ENCODE measurements at regions of chr22 and their contacts with region 1.

Region 1: GRCh38 chr22:46006379-46007002 is 29.5 kb upstream of the WNT7B start:
- DNase-seq: peak; percentile 65
- H3K4me3 ChIP-seq: no peak overlapping the region
- H3K27ac ChIP-seq: peak overlapping the region; percentile 87
- H3K27me3 ChIP-seq: no peaks in the 10 kb centered on the region
- CTCF ChIP-seq: peak; percentile 91

Region 2: DNA sequence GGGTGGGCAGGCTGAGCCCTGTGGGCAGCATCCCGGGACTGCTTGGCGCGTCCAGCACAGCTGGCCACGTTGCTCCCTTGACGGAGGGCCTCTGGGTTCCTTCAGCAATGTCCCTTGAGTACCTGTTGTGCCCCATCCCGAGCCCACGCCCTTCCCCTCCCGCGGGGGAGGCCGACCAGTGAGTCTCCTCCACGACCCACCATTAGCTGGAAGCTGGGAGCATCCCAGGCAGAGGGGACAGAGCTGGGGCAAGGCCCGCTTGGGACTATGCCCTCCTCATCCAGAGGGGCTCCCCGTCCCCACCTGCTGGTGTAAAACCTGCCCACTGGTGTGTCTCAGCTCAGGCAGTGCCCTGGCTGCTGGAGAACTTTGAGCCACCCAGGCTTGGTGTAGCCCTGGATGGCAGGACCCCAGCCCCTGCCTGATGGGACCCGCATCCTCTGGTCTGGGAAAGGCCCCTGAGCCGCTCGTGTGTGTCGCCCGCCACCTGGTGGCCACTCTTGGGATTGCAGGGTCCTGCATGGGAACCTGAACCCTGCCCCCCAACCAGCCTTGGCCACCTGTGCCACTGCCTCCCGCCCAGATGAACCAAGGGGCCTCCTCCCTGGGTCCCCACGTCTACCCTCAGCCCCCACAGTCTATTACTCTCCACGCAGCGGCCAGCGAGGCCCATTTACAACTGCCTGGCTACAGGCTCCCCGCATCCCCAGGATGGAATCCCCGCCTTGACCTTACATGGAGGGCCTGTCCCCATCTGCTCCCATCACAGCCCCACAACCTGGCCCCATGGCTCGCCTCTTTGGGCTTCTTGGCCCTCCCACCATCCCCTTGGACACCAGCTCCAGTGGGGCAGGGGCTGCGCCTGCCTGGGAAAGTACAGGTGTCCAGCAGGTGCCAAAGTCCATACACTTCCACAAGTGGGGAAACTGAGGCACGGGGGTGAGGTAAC is 1270.7 kb before region 1 on chr22:
- CTCF ChIA-PET with region 1: no interaction called
- POLR2A ChIA-PET with region 1: no interaction called
- DNase-seq: no peak
- H3K4me3 ChIP-seq: no peak overlapping the region
- H3K27ac ChIP-seq: no peak overlapping the region
- H3K27me3 ChIP-seq: no peaks in the 10 kb centered on the region
- CTCF ChIP-seq: peak; percentile 84

Region 3: GRCh38 chr22:45946805-45947600 is 59.5 kb before region 1 on chr22:
- CTCF ChIA-PET with region 1: no interaction called
- POLR2A ChIA-PET with region 1: no interaction called
- DNase-seq: no peak
- H3K4me3 ChIP-seq: no peak overlapping the region
- H3K27ac ChIP-seq: no peak overlapping the region
- H3K27me3 ChIP-seq: no peaks in the 10 kb centered on the region
- CTCF ChIP-seq: no peak

Region 4: GRCh38 chr22:45960477-45961386 is 45.8 kb before region 1 on chr22:
- CTCF ChIA-PET with region 1: no interaction called
- POLR2A ChIA-PET with region 1: no interaction called
- DNase-seq: no peak
- H3K4me3 ChIP-seq: no peak overlapping the region
- H3K27ac ChIP-seq: no peak overlapping the region
- H3K27me3 ChIP-seq: no peaks in the 10 kb centered on the region
- CTCF ChIP-seq: no peak

Region 5: GRCh38 chr22:46019351-46019750 is 12.9 kb after region 1 on chr22:
- CTCF ChIA-PET with region 1: interaction called, 31 read pairs
- POLR2A ChIA-PET with region 1: no interaction called
- DNase-seq: no peak
- H3K4me3 ChIP-seq: no peak overlapping the region
- H3K27ac ChIP-seq: no peak overlapping the region
- H3K27me3 ChIP-seq: no peaks in the 10 kb centered on the region
- CTCF ChIP-seq: no peak

Region 6: GRCh38 chr22:46033256-46034200 is 27.0 kb after region 1 on chr22:
- CTCF ChIA-PET with region 1: interaction called, 15 read pairs
- POLR2A ChIA-PET with region 1: interaction called, 5 read pairs
- DNase-seq: no peak
- H3K4me3 ChIP-seq: no peak overlapping the region
- H3K27ac ChIP-seq: no peak overlapping the region
- H3K27me3 ChIP-seq: peaks cover 2% of the 10 kb centered on the region
- CTCF ChIP-seq: no peak

Region 7: DNA sequence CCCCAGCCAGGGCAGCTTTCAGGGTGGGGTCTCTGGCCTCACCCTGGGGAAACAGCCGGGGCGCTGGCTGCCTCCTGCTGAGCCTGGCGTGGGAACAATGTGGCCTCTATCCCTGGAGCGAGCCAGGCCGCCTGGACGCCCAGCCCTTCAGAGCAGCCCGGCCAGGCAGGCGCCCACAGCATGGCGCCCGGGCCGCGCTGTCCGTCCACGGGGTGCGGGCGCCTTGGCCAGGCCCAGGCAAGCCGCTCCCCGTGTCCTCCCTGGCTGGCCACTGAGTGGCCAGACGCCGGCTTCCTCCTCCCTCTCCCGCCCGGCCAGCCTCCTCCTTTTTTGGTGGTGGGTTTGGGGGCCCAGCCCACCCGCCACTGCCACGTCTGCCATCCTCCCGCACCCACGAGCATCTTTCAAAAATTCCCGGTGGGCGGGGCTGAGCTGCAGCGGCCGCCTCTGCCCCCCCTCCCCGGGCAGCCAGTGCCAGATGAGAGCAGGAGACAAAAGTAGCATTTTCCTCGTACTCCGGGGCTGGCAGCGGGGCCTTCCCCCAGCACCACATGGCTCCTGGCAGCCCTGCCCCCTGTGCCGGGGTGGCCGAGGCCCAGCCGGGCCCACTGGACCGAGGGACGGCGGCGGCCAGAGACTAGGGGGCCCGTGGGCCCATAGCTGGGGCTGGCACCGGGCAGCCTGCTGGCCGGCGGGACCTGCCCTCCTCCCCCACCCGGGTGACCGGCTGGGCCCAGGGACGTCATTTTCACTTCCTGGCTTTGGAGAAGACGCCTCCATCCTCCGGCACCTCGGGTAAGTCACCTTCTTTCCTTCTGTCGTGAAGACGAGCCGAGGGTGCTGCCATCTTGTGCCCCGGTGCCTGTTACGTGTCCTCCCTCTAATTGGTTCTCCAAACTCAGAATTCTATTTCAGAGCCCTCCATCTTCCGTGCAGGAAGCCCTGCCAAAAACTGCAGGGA is 73.7 kb after region 1 on chr22:
- CTCF ChIA-PET with region 1: interaction called, 15 read pairs
- POLR2A ChIA-PET with region 1: interaction called, 3 read pairs
- DNase-seq: no peak
- H3K4me3 ChIP-seq: peak overlapping the region; percentile 56
- H3K27ac ChIP-seq: peak overlapping the region; percentile 57
- H3K27me3 ChIP-seq: no peaks in the 10 kb centered on the region
- CTCF ChIP-seq: no peak

Region 8: GRCh38 chr22:46108564-46109473 is 102.3 kb after region 1 on chr22:
- CTCF ChIA-PET with region 1: interaction called, 91 read pairs
- POLR2A ChIA-PET with region 1: no interaction called
- DNase-seq: no peak
- H3K4me3 ChIP-seq: no peak overlapping the region
- H3K27ac ChIP-seq: no peak overlapping the region
- H3K27me3 ChIP-seq: no peaks in the 10 kb centered on the region
- CTCF ChIP-seq: no peak

Region 9: DNA sequence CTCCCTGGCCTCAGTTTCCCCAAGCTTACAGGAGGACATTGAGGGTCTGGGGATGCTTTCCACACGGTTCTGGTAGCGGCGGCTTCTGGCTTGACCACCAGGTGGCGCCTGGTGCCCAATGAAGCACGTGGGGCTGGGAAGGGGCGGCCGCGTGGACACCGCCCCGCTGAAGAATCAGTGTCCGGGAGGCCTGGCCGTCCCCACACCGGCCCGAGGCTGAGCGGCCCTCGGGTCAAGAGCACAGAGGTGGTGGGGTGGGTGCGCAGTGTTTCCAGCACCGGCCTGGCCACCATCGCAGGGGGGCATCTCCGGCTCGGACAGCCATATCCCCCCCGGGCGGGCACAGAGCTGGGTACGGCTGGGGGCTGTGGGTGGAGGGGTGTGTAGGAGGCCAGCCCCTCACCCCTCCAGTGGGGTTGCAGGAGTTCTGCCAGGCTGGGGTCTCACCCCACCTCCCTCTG is 116.0 kb after region 1 on chr22:
- CTCF ChIA-PET with region 1: interaction called, 91 read pairs
- POLR2A ChIA-PET with region 1: interaction called, 24 read pairs
- DNase-seq: no peak
- H3K4me3 ChIP-seq: no peak overlapping the region
- H3K27ac ChIP-seq: no peak overlapping the region
- H3K27me3 ChIP-seq: no peaks in the 10 kb centered on the region
- CTCF ChIP-seq: peak; percentile 80

Measured in AG04450 (cell line).